Right ventricle myocardium inferior (tissue), 1 donor: ENCODE measurements at regions of chr7 and their contacts with region 1.

Region 1: GRCh38 chr7:105652359-105652993 is 71.2 kb upstream of the EFCAB10 start:
- DNase-seq: peak; percentile 84
- ATAC-seq: peak; percentile 90

Region 2: GRCh38 chr7:105487579-105488571 is 164.6 kb before region 1 on chr7:
- intact Hi-C with region 1: no loop called
- DNase-seq: no peak
- ATAC-seq: no peak

Region 3: DNA sequence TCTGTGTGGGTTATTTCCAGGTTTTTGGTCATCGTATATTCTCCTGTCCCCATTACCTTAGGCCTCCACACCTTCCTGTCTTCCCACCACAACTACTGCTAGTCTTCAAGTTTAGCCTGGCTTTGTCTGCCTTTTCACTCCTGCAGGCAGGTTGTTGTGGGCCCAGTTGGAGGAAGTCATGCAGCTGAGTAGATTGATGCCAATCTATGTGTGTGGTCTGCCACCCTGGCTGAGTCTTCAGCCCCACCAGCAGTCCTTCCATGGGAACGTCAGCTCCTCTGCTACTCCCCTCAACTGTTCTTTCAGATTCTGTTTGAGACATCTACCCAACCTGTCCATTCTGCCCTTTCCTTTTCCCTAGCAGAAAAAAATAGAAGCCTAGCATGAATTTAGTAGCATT is 114.1 kb before region 1 on chr7:
- intact Hi-C with region 1: no loop called
- DNase-seq: no peak
- ATAC-seq: no peak

Region 4: GRCh38 chr7:105594034-105594433 is 58.4 kb before region 1 on chr7:
- intact Hi-C with region 1: no loop called
- DNase-seq: no peak
- ATAC-seq: peak; percentile 37

Region 5: GRCh38 chr7:106042196-106042611 is 389.7 kb after region 1 on chr7:
- intact Hi-C with region 1: loop called (anchors 2 kb)
- DNase-seq: no peak
- ATAC-seq: no peak